H1 (cell line): ENCODE measurements at regions of chr17 and their contacts with region 1.

Region 1: DNA sequence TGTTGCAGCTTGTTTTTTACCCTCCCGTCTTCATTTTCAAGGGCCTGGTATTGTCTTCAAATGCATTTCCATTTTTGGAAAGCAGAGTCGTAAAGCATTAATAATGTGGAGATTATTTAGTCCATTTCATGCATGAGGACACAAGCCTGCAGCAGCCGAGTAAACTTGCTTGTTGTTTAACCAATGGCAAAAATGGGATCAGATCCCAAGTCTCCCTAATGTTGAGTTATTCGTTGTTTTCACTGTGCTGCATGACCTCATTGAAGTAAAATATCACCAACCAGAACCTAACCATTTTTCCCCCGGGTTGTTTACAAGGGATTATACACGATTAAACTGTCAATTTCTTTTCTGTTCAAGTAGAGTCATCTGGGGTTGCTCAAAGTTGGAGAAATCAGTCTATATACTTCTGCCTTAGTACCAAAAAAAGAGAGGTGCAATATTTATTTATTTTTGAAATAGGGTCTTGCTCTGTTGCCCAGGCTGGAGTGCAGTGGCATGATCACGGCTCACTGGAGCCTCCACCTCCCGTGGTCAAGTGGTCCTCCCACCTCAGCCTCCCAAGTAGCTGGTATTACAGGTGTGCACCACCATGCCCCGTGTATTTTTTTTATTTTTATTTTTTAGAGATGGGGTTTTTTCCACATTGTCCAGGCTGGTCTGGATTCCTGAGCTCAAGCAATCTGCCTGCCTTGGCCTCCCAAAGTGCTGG is 12.4 kb downstream of the AMZ2 start:
- DNase-seq: no peak
- H3K4me3 ChIP-seq: no peak overlapping the region
- H3K27ac ChIP-seq: no peak overlapping the region
- H3K4me1 ChIP-seq: peaks cover 0 to 6% (median under 1%) of the 10 kb centered on the region in 4 experiments; a peak in 2 of 7 replicates
- H3K27me3 ChIP-seq: 0 out of 7 replicates have a peak, but pooled peaks cover 0 to 3% (median 0%) of the 10 kb centered on the region in 4 experiments
- CTCF ChIP-seq: no peak
- EP300 ChIP-seq: no peak
- POLR2A ChIP-seq: no peak
- RAD21 ChIP-seq: no peak

Region 2: DNA sequence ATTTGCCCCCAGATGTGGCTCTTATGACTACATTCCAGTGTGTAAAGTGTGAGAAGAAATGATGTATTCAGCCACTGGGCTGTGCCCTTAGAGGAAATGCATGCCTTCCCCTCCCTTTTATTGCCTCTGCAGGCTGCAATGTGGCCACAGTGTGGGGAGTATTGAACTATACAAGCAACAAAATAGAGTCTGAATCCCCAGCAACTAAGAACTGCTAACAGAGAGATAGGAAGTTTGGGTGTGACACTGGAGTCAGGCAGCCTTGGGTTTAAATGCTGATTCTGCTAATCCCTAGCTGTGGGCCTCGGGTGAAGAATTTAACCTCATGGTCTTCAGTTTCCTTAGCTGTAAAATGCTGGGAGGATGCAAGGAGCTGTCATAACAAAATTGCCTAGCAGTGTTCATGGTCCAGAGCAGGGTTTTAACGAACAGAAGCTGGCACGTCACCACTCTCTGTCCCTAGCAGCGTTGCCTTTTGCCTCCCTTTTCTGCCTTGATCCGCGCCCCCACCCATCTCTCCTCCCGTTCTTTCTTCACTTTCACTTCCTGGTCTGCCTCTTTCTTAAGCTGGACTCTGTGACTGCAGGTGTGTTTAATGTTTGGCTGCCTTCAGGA is 174.3 kb before region 1 on chr17:
- CTCF ChIA-PET with region 1: no interaction called
- POLR2A ChIA-PET with region 1: no interaction called
- DNase-seq: no peak
- H3K4me3 ChIP-seq: no peak overlapping the region
- H3K27ac ChIP-seq: no peak overlapping the region
- H3K4me1 ChIP-seq: peaks cover 0 to 4% (median 1%) of the 10 kb centered on the region in 4 experiments; a peak in 1 of 7 replicates
- H3K27me3 ChIP-seq: no peaks in the 10 kb centered on the region
- CTCF ChIP-seq: no peak
- EP300 ChIP-seq: no peak
- POLR2A ChIP-seq: no peak
- RAD21 ChIP-seq: no peak

Region 3: GRCh38 chr17:68124873-68125870 is 135.0 kb before region 1 on chr17:
- CTCF ChIA-PET with region 1: no interaction called
- POLR2A ChIA-PET with region 1: no interaction called
- DNase-seq: no peak
- H3K4me3 ChIP-seq: no peak overlapping the region
- H3K27ac ChIP-seq: no peak overlapping the region
- H3K4me1 ChIP-seq: no peaks in the 10 kb centered on the region; a peak in 1 of 7 replicates
- H3K27me3 ChIP-seq: no peaks in the 10 kb centered on the region
- CTCF ChIP-seq: no peak
- EP300 ChIP-seq: no peak
- POLR2A ChIP-seq: no peak
- RAD21 ChIP-seq: no peak

Region 4: GRCh38 chr17:68291844-68292695 is 31.9 kb after region 1 on chr17:
- CTCF ChIA-PET with region 1: interaction called, 17 read pairs
- POLR2A ChIA-PET with region 1: interaction called, 4 read pairs
- DNase-seq: peak in 1 of 2 experiments; percentile 85
- H3K4me3 ChIP-seq: peak overlapping the region; percentile 41 to 67 (median 56)
- H3K27ac ChIP-seq: 0 out of 2 replicates have a peak overlapping the region, but pooled peaks have one; percentile 44
- H3K4me1 ChIP-seq: peaks cover 18 to 40% (median 29%) of the 10 kb centered on the region in 4 experiments
- H3K27me3 ChIP-seq: peaks cover 8 to 25% (median 24%) of the 10 kb centered on the region in 4 experiments
- CTCF ChIP-seq: peak in 2 of 3 experiments; percentile 3 to 40; a peak in 3 of 4 replicates
- EP300 ChIP-seq: no peak
- POLR2A ChIP-seq: peak; percentile 37 to 61
- RAD21 ChIP-seq: peak; percentile 24 to 46; a peak in 3 of 4 replicates

Region 5: DNA sequence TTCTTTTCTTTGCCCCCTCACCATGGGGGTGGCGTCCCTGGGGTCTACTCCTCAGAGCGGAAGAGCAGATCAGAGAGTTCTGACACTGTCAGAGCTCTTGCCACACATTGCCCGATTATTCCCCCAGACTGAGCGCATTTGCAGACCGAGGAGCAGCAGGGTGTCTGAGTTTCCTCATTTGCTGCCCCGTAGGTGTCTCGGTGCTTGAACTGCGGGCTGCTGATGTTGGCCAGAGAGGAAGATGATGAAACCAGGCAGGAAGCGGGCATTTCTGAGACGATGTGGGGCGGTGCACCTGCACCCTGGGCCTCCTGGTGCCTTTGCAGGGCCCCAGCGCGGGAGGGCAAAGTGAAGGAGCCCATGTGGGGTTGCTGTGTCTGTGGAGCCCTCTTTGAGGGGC is 86.2 kb after region 1 on chr17:
- CTCF ChIA-PET with region 1: no interaction called
- POLR2A ChIA-PET with region 1: no interaction called
- DNase-seq: no peak
- H3K4me3 ChIP-seq: no peak overlapping the region
- H3K27ac ChIP-seq: no peak overlapping the region
- H3K4me1 ChIP-seq: peaks cover 0 to 2% (median 0%) of the 10 kb centered on the region in 4 experiments; a peak in 1 of 7 replicates
- H3K27me3 ChIP-seq: no peaks in the 10 kb centered on the region
- CTCF ChIP-seq: no peak
- EP300 ChIP-seq: no peak
- POLR2A ChIP-seq: no peak
- RAD21 ChIP-seq: no peak

Region 6: GRCh38 chr17:68356520-68356919 is 96.3 kb after region 1 on chr17:
- CTCF ChIA-PET with region 1: interaction called, 10 read pairs
- POLR2A ChIA-PET with region 1: no interaction called
- DNase-seq: no peak
- H3K4me3 ChIP-seq: no peak overlapping the region
- H3K27ac ChIP-seq: no peak overlapping the region
- H3K4me1 ChIP-seq: peaks cover 0 to 13% (median 3%) of the 10 kb centered on the region in 4 experiments; a peak in 5 of 7 replicates
- H3K27me3 ChIP-seq: no peaks in the 10 kb centered on the region
- CTCF ChIP-seq: no peak
- EP300 ChIP-seq: no peak
- POLR2A ChIP-seq: no peak
- RAD21 ChIP-seq: no peak

Region 7: GRCh38 chr17:68381076-68381900 is 121.1 kb after region 1 on chr17:
- CTCF ChIA-PET with region 1: interaction called, 11 read pairs
- POLR2A ChIA-PET with region 1: no interaction called
- DNase-seq: no peak
- H3K4me3 ChIP-seq: no peak overlapping the region
- H3K27ac ChIP-seq: no peak overlapping the region
- H3K4me1 ChIP-seq: peaks cover 7 to 16% (median 12%) of the 10 kb centered on the region in 4 experiments
- H3K27me3 ChIP-seq: no peaks in the 10 kb centered on the region; a peak in 1 of 7 replicates
- CTCF ChIP-seq: no peak
- EP300 ChIP-seq: no peak
- POLR2A ChIP-seq: no peak
- RAD21 ChIP-seq: no peak

Region 8: DNA sequence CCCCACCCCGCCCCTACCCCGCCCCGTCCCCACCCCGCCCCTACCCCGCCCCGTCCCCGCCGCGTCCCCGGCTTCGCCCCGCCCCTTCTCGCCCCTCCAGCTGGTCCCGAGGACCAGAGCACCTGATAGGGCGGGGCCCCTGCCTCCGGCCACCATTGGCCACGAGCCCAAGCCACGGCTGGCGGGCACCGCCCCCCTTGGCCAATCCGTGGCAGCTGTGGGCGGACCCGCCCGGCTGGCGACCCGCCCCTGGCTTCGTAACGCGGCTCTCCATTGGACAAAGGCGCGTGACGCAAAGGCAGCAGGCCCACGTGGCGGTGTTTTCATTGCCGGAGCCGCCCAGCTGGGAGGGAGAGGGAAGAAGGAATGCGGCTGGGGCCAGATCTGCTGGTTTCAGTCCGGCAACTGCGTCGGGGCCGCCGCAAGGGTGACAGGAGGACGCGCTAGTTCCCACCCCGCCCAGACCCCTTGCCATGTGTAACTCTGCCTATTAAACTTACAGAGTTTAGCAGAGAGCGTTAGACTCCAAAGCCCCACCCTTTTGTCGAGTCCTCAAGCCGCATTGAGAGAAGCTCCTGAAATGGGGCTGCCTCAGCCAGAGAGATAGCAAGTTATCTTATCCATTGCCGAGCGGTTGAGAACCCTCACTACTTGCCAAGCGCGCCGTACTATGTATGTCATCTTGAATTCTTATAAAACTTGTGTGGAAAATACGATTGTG is 197.5 kb after region 1 on chr17:
- CTCF ChIA-PET with region 1: interaction called, 18 read pairs
- POLR2A ChIA-PET with region 1: no interaction called
- DNase-seq: peak; percentile 97 to 98
- H3K4me3 ChIP-seq: peak overlapping the region; percentile 40 to 71 (median 53)
- H3K27ac ChIP-seq: no peak overlapping the region
- H3K4me1 ChIP-seq: peaks cover 3 to 7% (median 5%) of the 10 kb centered on the region in 4 experiments; a peak in 6 of 7 replicates
- H3K27me3 ChIP-seq: no peaks in the 10 kb centered on the region
- CTCF ChIP-seq: no peak
- EP300 ChIP-seq: peak in 1 of 2 experiments; percentile 83; a peak in 1 of 3 replicates
- POLR2A ChIP-seq: peak in 1 of 2 experiments; percentile 64; a peak in 1 of 3 replicates
- RAD21 ChIP-seq: 0 out of 4 replicates have a peak, but pooled peaks of 1 of the 2 experiments have one; percentile 2